HEK293 (cell line): ENCODE measurements at regions of chr3 and their contacts with region 1.

Region 1: DNA sequence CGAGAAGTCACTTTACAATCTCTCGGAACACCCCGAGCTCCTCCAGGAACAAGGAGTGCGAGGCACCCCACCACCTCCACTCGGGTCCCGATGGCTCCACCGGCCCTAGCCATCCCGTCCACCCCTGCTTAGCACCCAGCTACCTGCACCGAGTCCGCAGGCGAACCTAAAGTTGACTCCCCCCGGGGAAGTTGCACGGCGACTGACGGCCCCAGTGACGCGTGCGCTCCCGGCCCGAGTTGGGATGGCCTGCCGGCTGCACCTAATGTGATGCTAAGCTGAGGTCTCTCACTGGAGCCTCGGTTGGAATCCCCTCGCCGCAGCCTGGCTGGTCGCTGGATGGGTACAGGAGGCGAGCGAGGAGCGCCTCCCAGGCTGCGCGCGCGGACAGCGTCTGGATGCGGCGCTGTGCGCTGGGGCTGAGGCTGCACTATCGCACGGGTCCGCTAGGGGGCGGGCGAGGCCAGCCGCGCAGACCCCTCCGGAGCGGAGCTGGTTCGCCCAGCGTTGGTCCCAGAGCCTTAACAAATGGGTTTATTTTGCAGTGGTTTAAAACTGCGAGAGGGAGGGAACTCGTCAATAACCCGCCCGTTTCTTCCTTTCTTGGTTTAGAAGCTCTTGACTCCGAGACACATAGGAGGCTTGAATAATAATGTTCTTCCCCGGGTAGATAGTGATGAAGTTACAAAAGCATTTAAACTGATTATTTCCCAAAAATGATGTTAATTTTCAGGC is at the start of gene OXTR:
- H3K4me3 ChIP-seq: peak within 1 kb of the TSS; percentile 30
- H3K27ac ChIP-seq: no peak within 1 kb of the TSS
- H3K4me1 ChIP-seq: no peaks in the 10 kb centered on the region
- CTCF ChIP-seq: peak; percentile 96

Region 2: DNA sequence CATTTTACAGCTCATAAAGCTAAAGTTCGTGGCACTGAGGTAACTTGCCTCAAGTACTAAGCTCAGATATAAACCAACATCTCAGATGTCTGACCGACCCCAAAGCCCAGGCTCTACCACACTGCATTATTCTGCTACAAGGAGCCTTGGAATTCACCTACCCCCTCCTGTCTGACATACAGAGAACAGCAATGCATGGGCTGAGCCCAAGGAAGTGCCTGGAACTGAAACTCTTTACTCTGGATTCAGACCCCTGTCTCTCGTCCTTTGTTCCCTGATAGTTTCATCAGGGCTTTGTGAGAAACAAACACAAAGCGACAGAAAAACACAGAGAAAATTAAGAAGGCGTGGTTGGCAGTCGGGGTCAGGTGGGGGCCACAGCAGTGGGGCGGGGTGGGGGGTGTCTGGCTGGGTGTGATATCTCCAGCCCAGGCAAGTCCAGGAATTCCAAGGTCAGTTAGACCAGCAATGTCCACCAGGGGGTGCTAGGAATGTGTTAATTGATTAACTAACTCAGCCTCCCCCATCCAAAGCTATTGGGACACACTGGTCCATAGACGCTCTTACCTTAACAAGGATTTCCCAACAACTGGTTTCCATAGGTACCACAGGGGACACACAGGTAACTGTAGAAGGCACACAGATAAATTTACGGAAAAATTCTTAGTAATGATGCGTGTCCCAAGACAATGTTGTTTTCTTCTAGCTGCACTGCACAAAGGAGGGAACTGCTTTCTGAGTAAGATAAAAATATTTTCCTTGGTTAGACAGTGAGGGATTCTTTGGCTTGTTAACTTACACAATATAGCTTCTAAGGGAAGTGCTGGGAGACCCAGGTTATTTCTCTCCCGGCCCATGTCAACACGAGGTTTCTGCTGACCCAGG is 105.8 kb before region 1 on chr3:
- CTCF ChIA-PET with region 1: interaction called, 20 read pairs
- POLR2A ChIA-PET with region 1: no interaction called
- H3K4me3 ChIP-seq: no peak overlapping the region
- H3K27ac ChIP-seq: no peak overlapping the region
- H3K4me1 ChIP-seq: peaks cover 20% of the 10 kb centered on the region
- CTCF ChIP-seq: no peak; the same call in 1 of the 2 replicates

Region 3: DNA sequence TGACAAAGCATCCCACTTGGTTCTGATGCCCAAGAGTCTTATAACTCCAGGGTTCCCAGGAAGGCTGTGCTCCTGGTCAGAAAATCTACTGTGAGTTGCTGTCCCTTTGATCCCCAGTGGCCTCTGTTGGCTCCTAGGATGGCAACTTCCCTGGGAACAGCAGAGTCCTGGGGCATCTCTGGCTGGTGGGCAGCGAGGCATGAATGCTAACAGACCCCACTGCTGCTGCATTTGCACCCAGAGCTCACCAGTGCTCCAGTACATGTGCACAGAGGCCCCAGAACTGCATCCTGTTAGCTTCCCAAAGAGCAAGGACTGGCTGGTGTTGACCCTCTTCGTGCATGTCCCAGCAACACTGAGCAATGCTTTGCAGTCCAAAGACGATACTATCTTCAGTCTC is 19.9 kb before region 1 on chr3:
- CTCF ChIA-PET with region 1: interaction called, 14 read pairs
- POLR2A ChIA-PET with region 1: no interaction called
- H3K4me3 ChIP-seq: no peak overlapping the region
- H3K27ac ChIP-seq: no peak overlapping the region
- H3K4me1 ChIP-seq: no peaks in the 10 kb centered on the region
- CTCF ChIP-seq: no peak

Region 4: GRCh38 chr3:8793242-8793641 is 24.0 kb after region 1 on chr3:
- CTCF ChIA-PET with region 1: interaction called, 18 read pairs
- POLR2A ChIA-PET with region 1: no interaction called
- H3K4me3 ChIP-seq: no peak overlapping the region
- H3K27ac ChIP-seq: no peak overlapping the region
- H3K4me1 ChIP-seq: no peaks in the 10 kb centered on the region
- CTCF ChIP-seq: no peak

Region 5: GRCh38 chr3:8816106-8816505 is 46.9 kb after region 1 on chr3:
- CTCF ChIA-PET with region 1: interaction called, 10 read pairs
- POLR2A ChIA-PET with region 1: no interaction called
- H3K4me3 ChIP-seq: no peak overlapping the region
- H3K27ac ChIP-seq: no peak overlapping the region
- H3K4me1 ChIP-seq: no peaks in the 10 kb centered on the region
- CTCF ChIP-seq: no peak

Region 6: GRCh38 chr3:8964436-8965370 is 195.4 kb after region 1 on chr3:
- CTCF ChIA-PET with region 1: interaction called, 12 read pairs
- POLR2A ChIA-PET with region 1: no interaction called
- H3K4me3 ChIP-seq: no peak overlapping the region
- H3K27ac ChIP-seq: no peak overlapping the region
- H3K4me1 ChIP-seq: peaks cover 5% of the 10 kb centered on the region; the same call in 1 of the 2 replicates
- CTCF ChIP-seq: no peak